ENCODE measurements at regions of chr4 and their contacts with region 1.

Region 1: DNA sequence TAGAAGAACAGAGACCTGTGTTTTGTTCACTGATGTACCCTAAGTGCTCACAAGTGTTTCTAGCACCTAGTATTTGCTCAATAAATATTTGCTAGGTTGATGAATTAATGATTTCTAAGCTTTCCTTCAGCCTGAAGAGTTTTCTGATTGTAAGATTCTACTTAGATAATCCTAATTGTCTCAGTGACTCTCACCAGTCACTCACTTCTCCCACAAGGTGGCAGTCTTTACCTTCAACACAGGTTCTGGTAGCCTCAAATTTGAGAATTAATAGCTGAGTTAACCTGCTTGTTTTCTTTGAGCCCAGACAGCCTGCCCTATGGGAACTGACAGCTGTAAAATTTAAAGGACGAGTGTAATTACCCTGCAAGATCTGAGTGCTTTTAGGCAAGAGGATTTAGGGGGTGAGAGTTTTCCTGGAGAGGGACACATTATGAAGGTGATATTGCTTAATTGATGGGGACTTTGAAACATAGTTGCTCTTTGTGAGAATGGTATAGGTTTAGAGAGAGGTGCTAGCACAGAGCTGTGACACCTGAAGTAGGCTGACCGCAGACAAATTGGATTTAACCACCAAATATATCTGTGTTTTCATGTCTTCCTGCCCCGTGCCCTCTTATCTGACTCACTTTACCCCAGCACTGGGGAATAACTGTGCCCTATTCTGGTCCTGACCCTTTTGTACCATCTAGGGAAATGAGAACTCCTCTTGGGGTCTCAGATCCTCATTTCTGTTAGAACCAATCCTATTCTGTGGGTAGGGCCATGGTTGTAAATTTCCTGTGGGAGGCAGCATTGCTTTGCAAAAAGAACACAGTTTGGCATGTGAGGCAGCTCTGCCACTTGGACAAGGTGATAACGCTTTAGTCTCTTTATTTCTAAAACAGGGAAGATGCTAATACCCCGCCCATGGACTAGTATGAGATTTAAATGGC is 27.7 kb downstream of the CD38 start:
- DNase-seq: peak; percentile 60
- ATAC-seq: peak; percentile 82
- H3K4me3 Mint-ChIP-seq: no peak overlapping the region
- H3K27ac Mint-ChIP-seq: no peak overlapping the region
- H3K4me1 Mint-ChIP-seq: peaks cover 38% of the 10 kb centered on the region
- H3K27me3 Mint-ChIP-seq: no peaks in the 10 kb centered on the region

Region 2: GRCh38 chr4:15479089-15479912 is 326.5 kb before region 1 on chr4:
- CTCF ChIA-PET with region 1: interaction called, 3 read pairs
- POLR2A ChIA-PET with region 1: no interaction called
- intact Hi-C with region 1: loop called in 1 of 2 experiments (anchors 5 kb)
- DNase-seq: peak; percentile 15
- ATAC-seq: peak; percentile 39
- H3K4me3 Mint-ChIP-seq: no peak overlapping the region
- H3K27ac Mint-ChIP-seq: no peak overlapping the region
- H3K4me1 Mint-ChIP-seq: no peaks in the 10 kb centered on the region
- H3K27me3 Mint-ChIP-seq: no peaks in the 10 kb centered on the region

Region 3: DNA sequence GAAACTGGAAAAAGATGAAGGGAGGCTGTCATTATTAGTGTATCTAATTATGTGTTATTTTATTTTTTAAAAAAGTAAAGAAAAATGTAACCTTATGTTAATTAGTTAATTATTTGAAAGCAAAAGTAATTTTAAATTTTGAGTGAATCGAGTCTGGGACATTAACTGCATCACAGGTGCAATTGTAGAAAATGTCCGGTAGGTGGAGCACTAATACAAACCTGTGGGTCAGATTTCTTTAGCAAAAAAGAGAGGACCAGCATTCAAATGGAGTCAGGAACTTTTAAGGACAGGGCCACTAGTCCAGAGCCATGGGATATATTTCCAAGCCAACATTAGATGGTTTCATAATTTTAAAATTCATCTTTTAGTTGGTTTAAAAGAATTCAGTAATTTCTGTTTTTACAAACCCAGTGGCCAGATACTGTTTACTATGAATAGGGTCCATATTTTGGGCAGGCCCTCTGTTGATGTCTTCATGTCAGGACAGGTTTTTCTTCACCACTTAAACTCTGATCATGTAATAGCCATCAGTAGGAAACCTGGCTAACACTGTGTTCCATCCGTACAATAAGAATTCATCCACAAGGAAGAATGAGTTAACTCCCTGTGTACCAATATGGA is 75.8 kb before region 1 on chr4:
- CTCF ChIA-PET with region 1: interaction called, 14 read pairs
- POLR2A ChIA-PET with region 1: no interaction called
- intact Hi-C with region 1: loop called (anchors 1 to 5 kb)
- DNase-seq: peak; percentile 19
- ATAC-seq: peak; percentile 65
- H3K4me3 Mint-ChIP-seq: no peak overlapping the region
- H3K27ac Mint-ChIP-seq: no peak overlapping the region
- H3K4me1 Mint-ChIP-seq: peaks cover 7% of the 10 kb centered on the region
- H3K27me3 Mint-ChIP-seq: no peaks in the 10 kb centered on the region

Region 4: GRCh38 chr4:15784959-15785634 is 20.8 kb before region 1 on chr4:
- CTCF ChIA-PET with region 1: interaction called, 11 read pairs
- POLR2A ChIA-PET with region 1: no interaction called
- intact Hi-C with region 1: no loop called
- DNase-seq: no peak
- ATAC-seq: no peak
- H3K4me3 Mint-ChIP-seq: no peak overlapping the region
- H3K27ac Mint-ChIP-seq: no peak overlapping the region
- H3K4me1 Mint-ChIP-seq: peaks cover 59% of the 10 kb centered on the region
- H3K27me3 Mint-ChIP-seq: no peaks in the 10 kb centered on the region

Region 5: GRCh38 chr4:15956179-15956850 is 150.5 kb after region 1 on chr4:
- CTCF ChIA-PET with region 1: interaction called, 57 read pairs
- POLR2A ChIA-PET with region 1: interaction called, 3 read pairs
- intact Hi-C with region 1: loop called (anchors 1 kb)
- DNase-seq: peak; percentile 92
- ATAC-seq: peak; percentile 93
- H3K4me3 Mint-ChIP-seq: no peak overlapping the region
- H3K27ac Mint-ChIP-seq: no peak overlapping the region
- H3K4me1 Mint-ChIP-seq: peaks cover 5% of the 10 kb centered on the region
- H3K27me3 Mint-ChIP-seq: no peaks in the 10 kb centered on the region

Region 6: DNA sequence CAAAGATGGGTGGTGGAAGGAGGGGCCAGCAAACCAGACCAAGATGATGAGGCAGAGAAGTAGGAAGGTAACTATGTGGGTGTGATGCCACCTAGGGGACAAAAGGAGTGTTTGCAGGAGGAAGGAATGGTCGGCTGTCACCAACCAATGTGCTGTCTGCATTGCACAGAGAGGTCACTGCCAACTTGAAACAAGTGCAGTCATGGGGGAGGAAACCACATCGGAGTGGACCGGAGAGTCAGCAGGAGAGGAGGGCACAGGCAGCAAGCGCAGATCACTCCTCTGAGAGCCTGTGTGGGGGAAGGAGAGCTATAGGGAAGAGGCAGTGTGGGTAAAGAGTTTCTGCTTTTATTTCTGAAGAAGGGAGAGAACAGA is 195.6 kb after region 1 on chr4:
- CTCF ChIA-PET with region 1: interaction called, 51 read pairs
- POLR2A ChIA-PET with region 1: no interaction called
- intact Hi-C with region 1: loop called (anchors 1 kb)
- DNase-seq: peak; percentile 67
- ATAC-seq: peak; percentile 94
- H3K4me3 Mint-ChIP-seq: no peak overlapping the region
- H3K27ac Mint-ChIP-seq: no peak overlapping the region
- H3K4me1 Mint-ChIP-seq: no peaks in the 10 kb centered on the region
- H3K27me3 Mint-ChIP-seq: no peaks in the 10 kb centered on the region

Region 7: GRCh38 chr4:16264798-16265197 is 458.9 kb after region 1 on chr4:
- CTCF ChIA-PET with region 1: interaction called, 15 read pairs
- POLR2A ChIA-PET with region 1: no interaction called
- intact Hi-C with region 1: loop called in 1 of 2 experiments (anchors 5 kb)
- DNase-seq: no peak
- ATAC-seq: peak; percentile 66
- H3K4me3 Mint-ChIP-seq: no peak overlapping the region
- H3K27ac Mint-ChIP-seq: no peak overlapping the region
- H3K4me1 Mint-ChIP-seq: peaks cover 19% of the 10 kb centered on the region
- H3K27me3 Mint-ChIP-seq: no peaks in the 10 kb centered on the region

Measured in activated CD4-positive, alpha-beta T cell treated with anti-CD3 and anti-CD28 coated beads for 36 hours (primary cell).